Esophagus squamous epithelium (tissue), 5 donors: ENCODE measurements at regions of chr11 and their contacts with region 1.

Region 1: DNA sequence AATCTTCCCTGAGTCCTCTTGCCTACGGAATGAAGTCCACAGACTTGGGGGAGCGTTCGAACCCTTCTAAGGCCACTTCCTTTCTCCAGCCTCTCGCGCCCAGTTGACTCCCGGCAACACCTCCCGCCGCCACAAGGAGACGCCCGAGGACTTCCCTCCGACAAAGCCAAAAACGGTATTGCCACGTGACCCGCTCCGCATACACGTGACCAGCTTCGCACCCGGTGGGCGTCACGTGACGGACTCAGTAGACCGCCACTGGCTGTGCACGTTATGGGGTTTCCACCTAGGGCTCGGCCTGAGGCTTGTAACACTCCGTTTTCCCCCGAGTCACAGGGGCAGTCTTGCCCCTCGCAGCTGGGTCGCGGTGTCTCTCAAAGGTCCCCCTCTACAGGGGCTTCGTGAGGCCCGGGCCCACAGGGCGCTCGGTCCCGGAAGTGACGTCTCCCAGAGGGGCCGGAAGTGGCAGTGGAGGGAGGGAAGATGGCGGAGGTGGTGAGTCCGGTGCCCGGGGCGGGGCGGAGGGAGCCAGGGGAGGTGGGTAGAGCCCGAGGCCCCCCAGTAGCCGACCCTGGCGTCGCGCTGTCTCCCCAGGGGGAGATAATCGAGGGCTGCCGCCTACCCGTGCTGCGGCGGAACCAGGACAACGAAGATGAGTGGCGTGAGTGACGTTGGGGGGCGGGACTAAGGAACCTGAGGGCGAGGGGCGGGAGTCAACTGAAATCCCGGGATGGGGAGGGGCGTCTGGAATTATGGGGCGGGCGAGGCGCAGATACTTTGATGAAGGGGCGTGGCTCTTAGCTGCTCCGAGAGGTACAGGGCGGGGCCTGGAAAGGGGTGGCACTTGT is at the start of gene KAT5:
- DNase-seq: peak; percentile 89
- H3K4me3 ChIP-seq: peak within 1 kb of the TSS; percentile 59 to 95 (median 77)
- H3K27ac ChIP-seq: peak within 1 kb of the TSS; percentile 99 to 100 (median 99)
- H3K4me1 ChIP-seq: peaks cover 12 to 37% (median 25%) of the 10 kb centered on the region in 3 donors
- H3K27me3 ChIP-seq: no peaks in the 10 kb centered on the region
- CTCF ChIP-seq: peak; percentile 96 to 100 (median 100)
- POLR2A ChIP-seq: peak in 3 of 4 donors; percentile 35 to 90 (median 77)
- total RNA-seq, gene KAT5: 38.2 to 64.7 (median 51.1) TPM

Region 2: DNA sequence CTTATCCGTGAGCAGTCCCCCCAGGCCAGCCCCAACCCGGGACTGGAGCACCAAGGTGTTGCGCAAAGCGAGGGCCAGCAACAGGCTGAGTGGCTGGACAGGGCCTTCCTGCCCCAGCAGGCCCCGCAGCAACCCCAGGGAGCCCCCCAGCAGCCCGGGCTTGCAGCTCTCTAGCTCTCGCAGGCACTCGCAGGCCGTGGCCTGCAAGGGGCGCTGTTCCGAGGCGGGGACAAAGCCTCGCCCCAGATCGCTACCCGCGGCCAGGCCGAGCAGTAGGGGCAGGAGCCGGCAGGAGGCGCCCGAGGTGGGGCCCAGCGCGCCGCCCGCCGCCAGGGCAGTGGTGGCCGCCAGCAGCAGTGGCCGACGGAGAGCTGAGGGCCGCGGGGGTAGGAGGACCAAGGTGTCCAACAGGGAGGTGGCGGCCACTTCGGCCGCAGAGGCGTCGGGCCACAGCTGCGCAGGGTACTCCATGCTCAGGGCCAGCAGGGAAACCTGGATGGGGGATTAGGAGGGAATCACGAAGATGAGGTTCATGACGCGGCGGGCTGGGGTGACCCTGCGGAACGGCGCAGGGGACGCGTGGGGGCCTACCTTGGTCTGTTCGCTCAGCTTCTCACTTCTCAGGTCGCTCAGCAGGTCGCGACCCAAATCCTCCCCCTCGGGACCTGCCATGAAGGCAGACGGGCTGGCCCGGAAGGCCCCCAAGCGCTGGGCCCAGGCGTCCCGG is 68.0 kb after region 1 on chr11:
- intact Hi-C with region 1: loop called (anchors 10 kb)
- DNase-seq: no peak
- H3K4me3 ChIP-seq: peak overlapping the region; percentile 79 to 100 (median 82)
- H3K27ac ChIP-seq: peak overlapping the region; percentile 88 to 95 (median 91)
- H3K4me1 ChIP-seq: peaks cover 48 to 90% (median 55%) of the 10 kb centered on the region in 3 donors
- H3K27me3 ChIP-seq: peaks cover 0 to 5% (median 0%) of the 10 kb centered on the region in 4 donors
- CTCF ChIP-seq: peak; percentile 91 to 100 (median 96)
- POLR2A ChIP-seq: peak in 1 of 4 donors; percentile 68

Region 3: GRCh38 chr11:65817835-65818742 is 106.1 kb after region 1 on chr11:
- intact Hi-C with region 1: loop called (anchors 5 kb)
- DNase-seq: peak; percentile 53
- H3K4me3 ChIP-seq: peak overlapping the region; percentile 52 to 82 (median 60)
- H3K27ac ChIP-seq: peak overlapping the region; percentile 84 to 94 (median 88)
- H3K4me1 ChIP-seq: peaks cover 8 to 49% (median 12%) of the 10 kb centered on the region in 3 donors
- H3K27me3 ChIP-seq: no peaks in the 10 kb centered on the region
- CTCF ChIP-seq: peak; percentile 95 to 100 (median 98)
- POLR2A ChIP-seq: peak in 1 of 4 donors; percentile 30

Region 4: DNA sequence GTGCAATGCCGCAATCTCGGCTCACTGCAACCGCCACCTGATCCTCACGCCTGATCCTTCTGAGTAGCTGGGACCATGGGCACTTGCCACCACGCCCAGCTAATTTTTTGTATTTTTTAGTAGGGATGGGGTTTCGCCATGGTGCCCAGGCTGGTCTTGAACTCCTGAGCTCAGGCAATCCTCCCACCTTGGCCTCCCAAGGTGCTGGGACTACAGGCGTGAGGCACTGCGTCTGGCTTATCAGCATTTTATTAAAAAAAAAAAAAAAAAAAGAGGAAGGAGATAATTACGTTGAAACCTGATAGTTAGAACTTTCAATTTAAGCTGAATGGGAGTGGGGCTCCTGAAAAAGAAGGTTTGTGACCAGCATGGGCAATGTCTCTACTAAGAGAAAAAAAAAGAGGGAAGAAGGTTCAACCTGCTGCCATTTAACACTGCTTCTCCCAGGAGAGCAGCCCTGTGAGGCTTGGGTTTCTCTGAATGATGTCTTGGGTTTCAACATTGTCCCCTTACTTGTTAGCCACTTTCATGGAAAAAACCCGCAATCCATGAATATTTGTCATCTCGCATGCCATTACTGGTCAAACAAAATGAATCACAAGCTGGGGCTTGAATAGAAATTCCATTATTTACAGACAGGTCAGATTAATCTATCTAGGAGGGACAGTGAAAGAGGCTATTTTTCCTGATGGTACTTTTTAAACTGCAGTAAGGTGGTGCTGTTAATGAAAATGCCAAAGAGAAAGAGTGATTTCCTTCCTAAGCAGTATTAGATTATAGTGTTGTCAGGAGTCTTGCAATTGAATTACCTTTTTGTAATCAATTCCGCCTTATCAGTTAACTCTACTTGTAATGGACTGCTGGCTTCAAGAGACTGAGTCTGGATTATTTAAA is 430.6 kb after region 1 on chr11:
- intact Hi-C with region 1: no loop called
- DNase-seq: no peak
- H3K4me3 ChIP-seq: no peak overlapping the region
- H3K27ac ChIP-seq: no peak overlapping the region
- H3K4me1 ChIP-seq: peaks cover 0 to 10% (median 5%) of the 10 kb centered on the region in 3 donors
- H3K27me3 ChIP-seq: no peaks in the 10 kb centered on the region
- CTCF ChIP-seq: no peak
- POLR2A ChIP-seq: no peak